ENCODE measurements at regions of chr7 and their contacts with region 1.

Region 1: DNA sequence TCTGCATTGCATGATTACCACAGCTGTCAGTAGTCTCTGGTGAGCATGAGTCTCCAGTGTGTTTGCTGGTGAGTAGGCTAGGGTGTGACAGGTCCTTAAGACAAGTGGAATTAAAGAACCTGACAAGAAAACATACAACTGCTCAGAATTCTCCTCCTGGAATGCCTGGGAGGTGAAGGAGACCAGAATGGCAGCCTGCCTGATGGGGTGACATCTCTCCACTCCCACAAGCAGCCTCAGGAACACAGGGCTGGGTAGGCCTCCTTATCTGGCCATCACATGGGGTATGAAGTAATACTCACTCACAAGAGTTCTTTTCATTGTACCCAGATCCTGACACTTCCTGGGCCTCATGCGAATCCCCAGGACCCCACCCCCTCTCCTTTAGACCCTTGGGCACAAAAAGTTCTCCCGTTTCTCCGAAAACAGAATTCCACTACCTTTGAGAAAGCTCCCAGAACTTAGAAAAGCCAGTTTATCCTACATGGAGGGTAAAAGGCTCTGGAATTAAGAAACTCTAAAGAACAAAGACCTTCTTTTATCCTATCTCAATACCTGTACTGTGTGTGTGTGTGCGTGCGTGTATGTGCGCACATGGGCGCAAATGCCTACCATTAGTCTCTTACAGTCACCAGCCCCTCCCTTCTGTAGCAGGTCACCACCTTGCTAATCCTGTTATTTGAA is 33.4 kb upstream of the C1GALT1 start:
- DNase-seq: peak; percentile 91
- ATAC-seq: peak; percentile 97
- H3K4me3 ChIP-seq: peak overlapping the region in 2 of 3 experiments; percentile 18 to 48; a peak in 2 of 6 replicates
- H3K27ac ChIP-seq: peak overlapping the region; percentile 89
- H3K4me1 ChIP-seq: peaks cover 53% of the 10 kb centered on the region
- H3K27me3 ChIP-seq: no peaks in the 10 kb centered on the region
- CTCF ChIP-seq: no peak
- EP300 ChIP-seq: peak in 1 of 2 experiments; percentile 60; a peak in 1 of 4 replicates
- POLR2A ChIP-seq: 0 out of 4 replicates have a peak, but pooled peaks of 1 of the 2 experiments have one; percentile 27
- RAD21 ChIP-seq: no peak

Region 2: DNA sequence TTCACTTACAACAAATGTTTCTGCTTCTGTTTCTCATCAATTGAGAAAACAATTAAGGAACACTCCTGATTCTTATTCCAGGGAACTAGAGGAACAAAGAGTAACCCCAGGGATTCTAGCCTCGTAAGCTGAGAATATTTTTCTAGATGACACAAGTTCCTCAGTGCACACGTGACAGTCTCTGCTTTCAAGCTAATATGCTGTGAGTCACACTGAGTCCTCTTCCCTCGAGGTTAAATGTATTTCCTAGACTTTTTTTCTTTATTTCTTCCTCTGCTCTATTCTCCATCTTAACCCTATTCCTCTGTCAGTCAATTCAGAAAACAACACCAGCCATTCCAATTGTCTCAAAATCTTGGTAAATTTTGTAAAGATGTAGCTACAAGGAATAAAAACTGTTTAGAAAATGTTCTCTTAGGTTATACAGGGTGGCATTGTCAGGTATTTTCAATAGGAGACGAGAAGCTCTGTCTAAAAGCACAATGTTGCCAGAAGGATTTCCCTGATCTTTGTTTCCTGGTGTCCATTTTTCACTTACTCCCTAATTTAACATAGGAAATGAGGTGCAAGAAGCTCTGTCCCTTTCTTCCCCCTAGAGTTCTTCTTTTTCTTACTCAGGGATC is 27.6 kb after region 1 on chr7:
- CTCF ChIA-PET with region 1: no interaction called
- POLR2A ChIA-PET with region 1: interaction called, 7 read pairs
- in situ Hi-C with region 1: no loop called
- intact Hi-C with region 1: loop called (anchors 2 kb)
- DNase-seq: peak; percentile 81
- ATAC-seq: peak; percentile 64
- H3K4me3 ChIP-seq: peak overlapping the region in 1 of 3 experiments; percentile 17; a peak in 1 of 6 replicates
- H3K27ac ChIP-seq: peak overlapping the region; percentile 87
- H3K4me1 ChIP-seq: peaks cover 86% of the 10 kb centered on the region
- H3K27me3 ChIP-seq: no peaks in the 10 kb centered on the region
- CTCF ChIP-seq: no peak
- EP300 ChIP-seq: no peak; a peak in 1 of 4 replicates
- POLR2A ChIP-seq: no peak
- RAD21 ChIP-seq: no peak

Region 3: DNA sequence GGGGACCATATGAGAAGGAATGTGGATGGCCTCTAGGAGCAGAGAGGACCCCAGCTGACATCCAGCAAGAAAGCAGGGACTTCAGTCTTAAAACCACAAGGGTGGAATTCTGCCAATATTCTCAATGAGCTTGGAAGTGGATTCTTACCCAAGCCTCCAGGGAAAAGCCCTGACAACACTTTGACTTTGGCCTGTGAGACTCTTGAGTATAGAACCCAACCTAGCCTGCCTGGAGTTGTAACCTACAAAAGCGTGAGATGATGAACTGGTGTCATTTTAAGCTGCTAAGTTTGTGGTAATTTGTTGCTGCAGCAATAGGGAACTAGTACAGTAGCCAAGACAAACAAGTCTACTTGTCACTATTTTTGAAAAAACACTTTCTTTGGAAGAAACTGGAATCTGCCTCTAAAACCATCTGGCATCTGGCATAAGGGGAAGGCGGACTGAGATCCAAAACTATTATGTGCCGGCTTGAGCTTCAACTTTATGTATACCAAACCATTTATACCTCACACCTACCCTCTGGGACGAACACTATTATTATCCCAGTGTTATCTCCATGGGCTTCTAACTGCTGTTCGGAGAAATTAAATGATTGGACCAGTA is 116.2 kb after region 1 on chr7:
- CTCF ChIA-PET with region 1: no interaction called
- POLR2A ChIA-PET with region 1: no interaction called
- in situ Hi-C with region 1: no loop called
- intact Hi-C with region 1: no loop called
- DNase-seq: no peak
- ATAC-seq: no peak
- H3K4me3 ChIP-seq: no peak overlapping the region
- H3K27ac ChIP-seq: no peak overlapping the region
- H3K4me1 ChIP-seq: no peaks in the 10 kb centered on the region
- H3K27me3 ChIP-seq: no peaks in the 10 kb centered on the region
- CTCF ChIP-seq: no peak
- EP300 ChIP-seq: no peak
- POLR2A ChIP-seq: no peak
- RAD21 ChIP-seq: no peak

Region 4: DNA sequence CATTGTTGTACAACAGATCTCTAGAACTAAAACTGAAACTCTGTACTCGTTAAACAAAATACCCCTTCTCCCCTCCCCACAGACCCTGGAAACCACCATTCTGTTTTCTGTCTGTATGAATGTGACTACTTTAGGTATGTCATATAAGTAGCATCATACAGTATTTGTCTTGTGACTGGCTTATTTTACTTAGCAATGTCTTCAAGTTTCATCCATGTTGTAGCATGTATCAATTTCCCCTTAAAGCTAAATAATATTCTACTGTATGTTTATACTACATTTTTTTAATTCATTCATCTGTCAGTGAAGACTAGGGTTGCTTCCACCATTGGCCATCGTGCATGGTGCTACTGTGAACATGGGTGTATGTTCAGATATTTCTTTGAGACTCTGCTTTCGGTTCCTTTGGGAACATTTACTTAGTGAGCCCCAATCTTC is 640.6 kb after region 1 on chr7:
- CTCF ChIA-PET with region 1: no interaction called
- POLR2A ChIA-PET with region 1: no interaction called
- in situ Hi-C with region 1: no loop called
- intact Hi-C with region 1: no loop called
- DNase-seq: no peak
- ATAC-seq: no peak
- H3K4me3 ChIP-seq: no peak overlapping the region
- H3K27ac ChIP-seq: no peak overlapping the region
- H3K4me1 ChIP-seq: no peaks in the 10 kb centered on the region
- H3K27me3 ChIP-seq: no peaks in the 10 kb centered on the region
- CTCF ChIP-seq: no peak
- EP300 ChIP-seq: no peak
- POLR2A ChIP-seq: no peak
- RAD21 ChIP-seq: no peak

Measured in HepG2 (cell line).